Activated B cell treated with CpG ODN at 0.5 μM for 24 hours (primary cell): ENCODE measurements at regions of chr1 and their contacts with region 1.

Region 1: DNA sequence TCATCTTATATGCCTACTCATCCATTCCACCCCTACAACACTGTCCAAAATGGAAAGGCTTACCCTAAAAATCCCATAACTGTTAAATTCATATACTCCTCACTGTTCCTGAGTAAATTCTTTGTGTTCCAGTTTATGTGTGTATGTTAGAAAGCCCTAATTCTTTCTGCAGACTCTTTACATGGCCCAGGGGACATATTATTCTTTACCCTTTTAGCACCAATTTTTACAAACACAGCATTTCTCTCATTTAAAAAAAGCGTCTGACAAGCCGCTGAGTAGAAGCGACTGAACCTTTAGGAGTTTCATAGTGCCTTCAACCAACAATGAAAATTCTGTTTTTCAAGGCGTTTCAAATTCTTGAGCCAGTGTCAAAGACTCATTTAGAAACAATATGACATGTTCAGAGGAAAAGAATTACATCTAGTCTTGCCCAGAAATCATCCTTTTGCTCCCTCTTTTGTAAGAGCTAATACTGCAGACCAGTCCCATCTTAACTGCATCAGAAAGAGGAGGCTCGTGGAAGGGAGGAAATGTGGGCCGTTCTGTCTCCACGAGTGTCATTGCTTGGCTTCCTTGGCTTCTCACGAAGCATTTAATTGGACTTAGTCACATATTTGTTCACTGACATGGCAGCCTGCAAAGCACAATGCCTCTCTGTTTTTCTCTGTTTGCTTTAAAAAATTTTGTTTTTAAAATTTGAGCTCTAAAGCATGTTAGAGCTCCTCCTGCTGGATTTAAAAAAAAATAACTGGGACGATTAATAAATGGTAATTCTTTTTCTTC is 21.3 kb upstream of the C1orf105 start:
- DNase-seq: no peak
- ATAC-seq: peak; percentile 50
- H3K4me3 Mint-ChIP-seq: peak overlapping the region; percentile 73
- H3K27ac Mint-ChIP-seq: peak overlapping the region; percentile 90
- H3K4me1 Mint-ChIP-seq: peaks cover 62% of the 10 kb centered on the region
- H3K27me3 Mint-ChIP-seq: no peaks in the 10 kb centered on the region
- CTCF ChIP-seq: no peak

Region 2: DNA sequence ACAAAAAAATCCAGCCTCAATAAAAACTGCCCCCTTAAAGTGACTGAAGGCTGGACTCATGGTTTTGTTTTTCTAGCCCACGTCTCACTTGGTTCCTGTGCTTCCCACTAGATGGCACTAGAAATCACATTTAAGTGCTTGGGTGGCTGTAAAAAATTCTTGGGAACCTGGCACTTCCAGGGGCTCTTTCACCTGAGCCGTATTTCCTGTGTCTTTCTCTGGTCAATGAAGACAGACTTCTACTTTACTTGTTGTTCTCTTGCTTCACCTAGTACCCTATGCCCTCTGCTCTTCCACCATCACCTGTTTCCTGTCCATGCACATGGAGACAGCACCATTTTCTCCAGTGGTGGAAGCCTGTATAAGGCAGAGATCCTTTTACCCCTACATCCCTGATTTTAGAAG is 597.7 kb before region 1 on chr1:
- CTCF ChIA-PET with region 1: no interaction called
- POLR2A ChIA-PET with region 1: no interaction called
- intact Hi-C with region 1: loop called (anchors 1 kb)
- DNase-seq: no peak
- ATAC-seq: no peak
- H3K4me3 Mint-ChIP-seq: no peak overlapping the region
- H3K27ac Mint-ChIP-seq: no peak overlapping the region
- H3K4me1 Mint-ChIP-seq: peaks cover 15% of the 10 kb centered on the region
- H3K27me3 Mint-ChIP-seq: no peaks in the 10 kb centered on the region
- CTCF ChIP-seq: no peak

Region 3: GRCh38 chr1:172002725-172003345 is 396.3 kb before region 1 on chr1:
- CTCF ChIA-PET with region 1: interaction called, 63 read pairs
- POLR2A ChIA-PET with region 1: interaction called, 4 read pairs
- intact Hi-C with region 1: loop called (anchors 1 kb)
- DNase-seq: no peak
- ATAC-seq: no peak
- H3K4me3 Mint-ChIP-seq: no peak overlapping the region
- H3K27ac Mint-ChIP-seq: no peak overlapping the region
- H3K4me1 Mint-ChIP-seq: no peaks in the 10 kb centered on the region
- H3K27me3 Mint-ChIP-seq: no peaks in the 10 kb centered on the region
- CTCF ChIP-seq: peak; percentile 32

Region 4: DNA sequence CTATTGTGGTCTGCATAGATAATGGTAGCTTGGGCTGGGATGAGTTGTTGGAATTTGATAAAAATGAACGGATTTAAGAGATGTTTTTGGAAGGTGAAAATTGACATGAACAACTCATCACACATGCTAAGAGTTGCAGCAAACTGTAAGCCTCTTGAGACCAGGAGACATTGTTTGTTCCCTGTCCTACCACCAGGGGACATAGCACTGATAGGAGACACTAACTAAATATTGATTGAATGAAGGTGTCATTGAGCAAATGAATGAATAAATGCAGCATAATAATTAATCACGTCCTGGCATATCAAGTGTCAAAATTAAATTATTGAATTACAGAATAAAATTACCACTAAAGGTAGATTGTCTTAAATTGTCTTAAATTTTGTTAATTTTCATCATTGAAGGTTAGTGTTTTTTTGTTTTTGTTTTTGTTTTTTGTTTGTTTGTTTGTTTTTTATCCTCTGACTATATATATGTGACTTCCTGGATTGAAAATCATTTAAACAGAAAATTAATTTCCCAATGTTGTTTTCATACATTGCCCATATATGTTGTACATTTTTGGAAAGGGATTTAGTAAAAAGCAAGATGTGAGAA is 264.0 kb before region 1 on chr1:
- CTCF ChIA-PET with region 1: interaction called, 14 read pairs
- POLR2A ChIA-PET with region 1: interaction called, 5 read pairs
- intact Hi-C with region 1: loop called (anchors 1 kb)
- DNase-seq: no peak
- ATAC-seq: peak; percentile 49
- H3K4me3 Mint-ChIP-seq: no peak overlapping the region
- H3K27ac Mint-ChIP-seq: no peak overlapping the region
- H3K4me1 Mint-ChIP-seq: peaks cover 5% of the 10 kb centered on the region
- H3K27me3 Mint-ChIP-seq: no peaks in the 10 kb centered on the region
- CTCF ChIP-seq: no peak

Region 5: DNA sequence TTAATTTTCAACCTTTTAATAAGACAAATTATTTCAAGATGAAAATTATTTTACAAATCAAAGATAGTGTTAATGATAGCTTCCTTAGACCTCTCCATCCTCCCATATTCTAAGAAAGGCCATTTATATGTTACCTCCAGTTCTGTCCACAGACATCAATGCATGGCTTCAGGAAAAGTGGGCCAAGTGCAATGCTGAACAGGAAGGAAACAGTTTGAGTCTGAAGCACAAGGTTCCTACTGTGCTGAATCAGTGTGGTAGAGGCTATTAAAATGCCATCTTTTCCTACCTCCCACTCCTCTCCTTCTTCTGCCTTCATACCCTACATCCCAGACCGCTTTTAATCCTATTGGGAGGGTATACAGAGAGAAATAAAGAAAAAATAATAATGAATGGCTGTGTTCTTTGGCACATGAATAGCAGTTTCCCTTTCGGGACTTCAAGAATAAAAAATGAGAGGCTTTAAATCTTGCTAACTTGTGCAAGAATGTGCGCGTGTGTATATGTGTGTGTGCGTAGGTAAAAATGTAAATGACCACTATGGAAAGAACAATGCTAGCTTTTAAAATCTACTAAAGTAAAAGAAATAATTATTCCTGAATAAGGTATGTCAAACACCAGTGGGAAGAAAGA is 41.3 kb before region 1 on chr1:
- CTCF ChIA-PET with region 1: interaction called, 17 read pairs
- POLR2A ChIA-PET with region 1: interaction called, 119 read pairs
- intact Hi-C with region 1: loop called (anchors 1 kb)
- DNase-seq: no peak
- ATAC-seq: peak; percentile 10
- H3K4me3 Mint-ChIP-seq: peak overlapping the region; percentile 58
- H3K27ac Mint-ChIP-seq: peak overlapping the region; percentile 91
- H3K4me1 Mint-ChIP-seq: peaks cover 53% of the 10 kb centered on the region
- H3K27me3 Mint-ChIP-seq: no peaks in the 10 kb centered on the region
- CTCF ChIP-seq: no peak

Region 6: GRCh38 chr1:172429331-172430127 is 30.4 kb after region 1 on chr1:
- CTCF ChIA-PET with region 1: interaction called, 5 read pairs
- POLR2A ChIA-PET with region 1: interaction called, 3 read pairs
- intact Hi-C with region 1: loop called (anchors 2 kb)
- DNase-seq: no peak
- ATAC-seq: peak; percentile 67
- H3K4me3 Mint-ChIP-seq: no peak overlapping the region
- H3K27ac Mint-ChIP-seq: no peak overlapping the region
- H3K4me1 Mint-ChIP-seq: peaks cover 13% of the 10 kb centered on the region
- H3K27me3 Mint-ChIP-seq: no peaks in the 10 kb centered on the region
- CTCF ChIP-seq: no peak